Breast epithelium (tissue), 4 donors: ENCODE measurements at regions of chr1 and their contacts with region 1.

Region 1: DNA sequence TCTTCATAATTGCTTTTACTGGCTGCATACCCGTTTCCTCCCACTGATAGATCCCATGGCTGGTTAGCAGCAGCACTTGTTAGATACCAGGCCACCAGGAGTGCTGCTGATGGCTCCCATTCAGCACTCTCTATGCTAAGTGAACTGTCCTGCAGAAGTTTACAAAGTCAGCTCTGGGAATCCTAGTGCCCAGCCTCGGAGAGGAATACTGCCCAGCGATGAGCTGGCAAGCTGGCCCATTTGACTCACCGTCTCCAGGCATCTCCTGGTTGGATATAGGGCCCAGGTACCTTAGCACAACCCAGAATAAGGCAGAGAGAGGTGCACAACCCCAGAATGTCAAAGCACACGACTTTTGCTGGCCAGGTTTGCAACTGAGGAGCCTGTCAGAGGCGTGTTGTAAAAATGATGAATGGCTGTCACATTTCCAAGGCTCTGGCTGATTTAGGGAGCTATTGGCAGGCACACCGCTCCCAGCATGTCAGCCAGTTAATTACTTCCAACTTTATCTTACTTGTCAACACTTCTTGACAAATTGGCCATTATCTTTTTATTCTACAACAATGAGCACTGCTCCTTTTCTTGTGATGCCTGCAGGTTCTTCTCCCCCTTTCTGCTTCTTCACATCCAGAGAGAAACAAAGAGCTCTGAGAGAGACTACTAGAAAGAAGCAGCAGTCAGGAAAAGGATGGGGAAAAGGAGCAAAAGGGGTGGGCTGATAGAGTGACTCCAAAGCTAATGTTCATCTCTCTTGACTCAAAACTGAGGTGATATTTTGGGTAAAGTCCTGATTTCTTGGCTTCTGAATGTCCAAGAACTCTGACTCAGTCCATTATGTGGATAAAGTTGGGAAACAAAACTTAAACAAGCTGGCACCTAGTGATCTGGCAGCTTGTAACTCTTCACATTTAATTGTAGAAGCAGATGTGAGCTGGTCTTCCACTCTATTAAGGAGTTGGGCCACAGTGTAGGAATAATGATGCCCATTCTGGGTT is 10.8 kb upstream of the ANGPTL7 start:
- DNase-seq: no peak
- H3K4me3 ChIP-seq: no peak overlapping the region
- H3K27ac ChIP-seq: peak overlapping the region in 1 of 2 donors; percentile 34
- H3K4me1 ChIP-seq: no peaks in the 10 kb centered on the region
- H3K27me3 ChIP-seq: no peaks in the 10 kb centered on the region
- CTCF ChIP-seq: no peak
- POLR2A ChIP-seq: no peak

Region 2: DNA sequence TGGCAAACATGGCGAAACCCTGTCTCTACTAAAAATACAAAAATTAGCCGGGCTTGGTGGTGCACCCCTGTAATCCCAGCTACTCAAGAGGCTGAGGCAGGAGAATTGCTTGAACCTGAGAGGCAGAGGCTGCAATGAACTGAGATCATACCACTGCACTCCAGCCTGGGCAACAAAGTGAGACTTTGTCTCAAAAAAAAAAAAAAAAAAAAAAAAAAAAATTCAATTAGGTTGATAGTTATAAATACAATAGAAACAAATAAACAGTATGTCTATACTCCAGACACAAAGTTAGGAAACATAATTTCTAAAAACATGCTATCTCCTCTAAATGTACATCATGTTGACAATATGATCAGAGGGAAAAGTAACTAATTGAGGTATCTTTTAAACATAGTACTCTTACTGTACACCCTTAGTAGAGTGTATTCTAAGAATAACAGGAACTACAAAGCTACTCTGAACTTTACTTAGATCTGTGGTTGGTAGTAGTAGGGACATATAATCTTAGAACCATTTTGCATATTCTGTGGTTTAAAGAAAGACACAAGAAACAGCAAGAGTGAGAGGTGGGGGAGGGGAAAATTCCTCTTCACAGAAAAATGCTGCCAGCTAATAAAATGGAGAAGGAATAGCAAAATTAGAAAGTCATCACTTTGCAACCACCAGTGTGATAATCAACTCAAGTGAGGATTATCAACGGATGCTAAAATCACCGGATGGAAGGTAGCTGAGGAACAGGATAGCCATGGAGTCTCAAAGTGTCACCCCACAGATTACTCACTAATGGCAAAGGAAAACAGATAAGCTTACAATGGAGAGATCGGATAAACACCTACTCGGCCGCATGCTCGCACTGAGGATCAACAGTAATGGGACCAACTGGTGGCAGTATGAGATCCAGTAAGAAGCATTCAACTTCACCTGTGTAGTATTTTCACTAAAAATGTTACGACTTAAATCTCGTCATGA is 49.1 kb after region 1 on chr1:
- intact Hi-C with region 1: loop called (anchors 5 kb)
- DNase-seq: no peak
- H3K4me3 ChIP-seq: no peak overlapping the region
- H3K27ac ChIP-seq: no peak overlapping the region
- H3K4me1 ChIP-seq: no peaks in the 10 kb centered on the region
- H3K27me3 ChIP-seq: no peaks in the 10 kb centered on the region
- CTCF ChIP-seq: no peak
- POLR2A ChIP-seq: no peak

Region 3: DNA sequence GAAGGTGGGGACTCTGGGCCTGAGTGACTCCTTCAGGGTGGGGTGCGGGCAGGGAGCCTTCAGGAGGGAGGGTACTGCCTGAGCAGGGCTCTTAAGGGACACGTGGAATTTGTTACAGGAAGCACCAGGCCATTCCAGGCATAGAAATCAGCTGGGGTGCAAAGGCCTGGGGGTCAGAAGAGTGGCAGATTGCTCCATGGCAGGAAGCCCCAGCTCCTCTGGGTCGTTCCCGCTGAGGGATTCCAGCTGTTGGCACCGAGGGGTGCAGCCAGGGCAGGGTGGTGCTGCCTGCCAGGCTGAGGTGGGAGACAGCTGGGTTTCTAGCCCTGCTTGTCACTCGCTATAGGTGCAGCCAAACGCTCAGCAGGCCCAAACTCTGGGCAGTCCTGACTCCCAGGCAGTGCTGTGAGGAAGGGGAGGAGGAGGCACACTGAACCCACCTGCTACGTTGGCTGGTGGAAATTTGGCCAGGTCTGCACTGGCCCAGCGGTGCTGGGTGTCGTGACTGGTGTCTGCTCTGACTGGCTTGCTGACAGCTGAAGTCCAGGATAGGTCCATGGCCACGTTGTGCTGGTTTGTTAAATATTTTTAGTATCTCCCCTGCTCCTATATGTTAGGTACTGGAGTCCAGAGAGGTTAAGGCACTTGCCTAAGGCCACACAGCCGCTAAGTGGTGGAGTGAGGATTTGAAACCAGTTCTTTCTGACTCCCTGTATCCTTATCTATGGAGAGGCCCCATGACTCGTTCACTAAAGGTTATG is 1007.8 kb after region 1 on chr1:
- intact Hi-C with region 1: no loop called
- DNase-seq: no peak
- H3K4me3 ChIP-seq: peak overlapping the region in 2 of 3 donors; percentile 5 to 46
- H3K27ac ChIP-seq: peak overlapping the region; percentile 62 to 95
- H3K4me1 ChIP-seq: peaks cover 7 to 15% of the 10 kb centered on the region in 2 donors
- H3K27me3 ChIP-seq: no peaks in the 10 kb centered on the region
- CTCF ChIP-seq: no peak
- POLR2A ChIP-seq: no peak